ENCODE measurements at regions of chr13 and their contacts with region 1.

Region 1: DNA sequence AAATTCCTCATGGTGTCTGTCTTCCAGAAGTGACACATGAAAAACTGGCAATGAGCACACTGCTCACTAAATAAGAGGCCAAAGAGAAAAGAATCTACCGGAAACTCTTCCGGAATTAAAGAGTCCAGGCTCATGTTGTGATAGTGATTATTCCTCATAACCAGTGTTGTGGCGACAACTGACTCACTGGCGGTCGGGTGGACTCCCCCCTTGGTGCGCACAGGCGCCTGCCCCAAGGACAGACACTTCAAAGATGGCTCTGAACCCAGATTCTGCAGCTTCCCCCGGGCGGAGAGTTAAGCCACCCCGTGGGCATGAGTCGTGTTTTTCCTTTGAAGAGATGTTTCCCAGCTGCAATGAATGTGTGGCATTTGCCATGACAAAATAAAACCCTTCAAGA is 10.3 kb downstream of the IL17D start:
- DNase-seq: peak; percentile 76 to 85
- ATAC-seq: peak; percentile 55
- H3K4me3 ChIP-seq: no peak overlapping the region
- H3K27ac ChIP-seq: no peak overlapping the region
- H3K4me1 ChIP-seq: peaks cover 0 to 3% of the 10 kb centered on the region in 2 donors
- H3K27me3 ChIP-seq: no peaks in the 10 kb centered on the region

Region 2: GRCh38 chr13:20160847-20161274 is 552.9 kb before region 1 on chr13 and contains the start of gene GJA3:
- intact Hi-C with region 1: no loop called
- DNase-seq: no peak
- ATAC-seq: peak; percentile 26
- H3K4me3 ChIP-seq: peak within 1 kb of the TSS; percentile 6
- H3K27ac ChIP-seq: no peak within 1 kb of the TSS
- H3K4me1 ChIP-seq: no peaks in the 10 kb centered on the region
- H3K27me3 ChIP-seq: no peaks in the 10 kb centered on the region
- total RNA-seq, gene GJA3: 0.19 to 0.42 TPM

Region 3: DNA sequence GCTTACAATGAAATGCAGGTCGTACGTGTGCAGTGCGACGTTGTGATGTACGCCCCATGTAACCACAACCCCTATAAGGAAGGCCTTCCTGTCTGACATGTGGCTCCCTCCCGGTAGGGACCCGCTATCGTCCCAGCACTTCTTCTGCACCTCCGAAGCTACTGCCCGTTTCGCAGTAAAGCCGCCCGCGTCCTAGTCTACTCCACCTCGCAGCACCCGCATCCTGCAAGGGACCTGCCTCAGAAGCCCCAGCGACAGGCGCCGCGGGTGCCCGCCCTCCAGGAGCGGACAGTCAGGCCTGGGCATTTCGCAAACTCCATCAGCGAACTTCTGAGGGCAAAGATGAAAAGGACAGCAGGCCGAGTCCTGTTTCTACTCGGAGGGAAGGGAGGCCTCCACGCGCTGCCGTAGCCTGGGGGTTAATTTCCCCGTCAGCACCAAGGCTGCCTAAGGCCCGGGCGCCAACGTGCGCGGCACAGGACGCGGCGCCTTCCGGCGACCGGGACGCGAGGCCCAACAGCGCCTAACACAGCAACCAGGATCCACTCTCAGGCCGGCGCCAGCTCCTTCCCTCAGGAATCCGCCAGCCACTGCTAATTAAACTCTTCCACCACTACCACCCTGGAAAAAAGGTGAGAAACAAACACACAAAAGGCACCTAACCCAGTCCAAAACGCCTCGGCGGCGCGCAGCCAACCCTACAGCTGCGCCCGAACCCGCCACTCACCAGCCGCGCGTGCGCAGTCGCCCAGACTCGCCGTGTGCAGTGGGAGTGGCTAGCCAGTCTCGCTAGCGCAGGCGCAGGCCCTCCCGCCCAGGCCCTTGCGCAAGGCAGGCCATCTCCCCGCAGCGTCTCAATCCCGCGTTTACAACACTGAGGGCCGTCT is 59.7 kb after region 1 on chr13 and contains the start of gene EEF1AKMT1:
- intact Hi-C with region 1: loop called (anchors 5 kb)
- DNase-seq: peak; percentile 97 to 98
- ATAC-seq: peak; percentile 100
- H3K4me3 ChIP-seq: peak within 1 kb of the TSS; percentile 12 to 55
- H3K27ac ChIP-seq: peak within 1 kb of the TSS; percentile 20 to 36
- H3K4me1 ChIP-seq: no peaks in the 10 kb centered on the region
- H3K27me3 ChIP-seq: no peaks in the 10 kb centered on the region
- total RNA-seq, gene EEF1AKMT1: 9.1 to 10.1 TPM

Region 4: GRCh38 chr13:20828539-20829364 is 115.0 kb after region 1 on chr13:
- intact Hi-C with region 1: loop called (anchors 2 kb)
- DNase-seq: no peak
- ATAC-seq: peak; percentile 63
- H3K4me3 ChIP-seq: no peak overlapping the region
- H3K27ac ChIP-seq: no peak overlapping the region
- H3K4me1 ChIP-seq: peaks cover 2 to 3% of the 10 kb centered on the region in 2 donors
- H3K27me3 ChIP-seq: no peaks in the 10 kb centered on the region

Region 5: GRCh38 chr13:20924758-20925394 is 211.1 kb after region 1 on chr13:
- intact Hi-C with region 1: loop called (anchors 2 to 5 kb)
- DNase-seq: peak; percentile 83 to 86
- ATAC-seq: no peak
- H3K4me3 ChIP-seq: no peak overlapping the region
- H3K27ac ChIP-seq: no peak overlapping the region
- H3K4me1 ChIP-seq: no peaks in the 10 kb centered on the region
- H3K27me3 ChIP-seq: no peaks in the 10 kb centered on the region

Region 6: GRCh38 chr13:21579754-21580316 is 866.1 kb after region 1 on chr13:
- intact Hi-C with region 1: no loop called
- DNase-seq: no peak
- ATAC-seq: no peak
- H3K4me3 ChIP-seq: no peak overlapping the region
- H3K27ac ChIP-seq: no peak overlapping the region
- H3K4me1 ChIP-seq: no peaks in the 10 kb centered on the region
- H3K27me3 ChIP-seq: no peaks in the 10 kb centered on the region

Measured in aorta (tissue), 5 donors.